B cell (primary cell): ENCODE measurements at regions of chr2 and their contacts with region 1.

Region 1: GRCh38 chr2:39124000-39124745 is 3.3 kb upstream of the SOS1 start:
- DNase-seq: peak; percentile 97
- ATAC-seq: peak; percentile 73
- H3K4me3 ChIP-seq: peak overlapping the region; percentile 72 to 96 (median 85)
- H3K4me3 Mint-ChIP-seq: peak overlapping the region; percentile 86
- H3K27ac ChIP-seq: peak overlapping the region; percentile 87 to 94
- H3K27ac Mint-ChIP-seq: peak overlapping the region; percentile 86
- H3K4me1 ChIP-seq: peaks cover 42 to 43% of the 10 kb centered on the region in 2 donors
- H3K4me1 Mint-ChIP-seq: peaks cover 54% of the 10 kb centered on the region
- H3K27me3 ChIP-seq: no peaks in the 10 kb centered on the region
- H3K27me3 Mint-ChIP-seq: no peaks in the 10 kb centered on the region
- CTCF ChIP-seq: peak; percentile 82

Region 2: GRCh38 chr2:38665854-38666555 is 458.2 kb before region 1 on chr2 and contains the start of gene GALM:
- CTCF ChIA-PET with region 1: no interaction called
- POLR2A ChIA-PET with region 1: no interaction called
- intact Hi-C with region 1: loop called (anchors 5 kb)
- DNase-seq: peak; percentile 50
- ATAC-seq: peak; percentile 70
- H3K4me3 ChIP-seq: peak within 1 kb of the TSS; percentile 66 to 90 (median 77)
- H3K4me3 Mint-ChIP-seq: peak within 1 kb of the TSS; percentile 90
- H3K27ac ChIP-seq: peak within 1 kb of the TSS; percentile 46 to 62
- H3K27ac Mint-ChIP-seq: peak within 1 kb of the TSS; percentile 66
- H3K4me1 ChIP-seq: peaks cover 8 to 21% of the 10 kb centered on the region in 2 donors
- H3K4me1 Mint-ChIP-seq: peaks cover 22% of the 10 kb centered on the region
- H3K27me3 ChIP-seq: no peaks in the 10 kb centered on the region
- H3K27me3 Mint-ChIP-seq: no peaks in the 10 kb centered on the region
- CTCF ChIP-seq: no peak
- total RNA-seq, gene GALM: 5.1 and 5.8 TPM in 2 replicates

Region 3: DNA sequence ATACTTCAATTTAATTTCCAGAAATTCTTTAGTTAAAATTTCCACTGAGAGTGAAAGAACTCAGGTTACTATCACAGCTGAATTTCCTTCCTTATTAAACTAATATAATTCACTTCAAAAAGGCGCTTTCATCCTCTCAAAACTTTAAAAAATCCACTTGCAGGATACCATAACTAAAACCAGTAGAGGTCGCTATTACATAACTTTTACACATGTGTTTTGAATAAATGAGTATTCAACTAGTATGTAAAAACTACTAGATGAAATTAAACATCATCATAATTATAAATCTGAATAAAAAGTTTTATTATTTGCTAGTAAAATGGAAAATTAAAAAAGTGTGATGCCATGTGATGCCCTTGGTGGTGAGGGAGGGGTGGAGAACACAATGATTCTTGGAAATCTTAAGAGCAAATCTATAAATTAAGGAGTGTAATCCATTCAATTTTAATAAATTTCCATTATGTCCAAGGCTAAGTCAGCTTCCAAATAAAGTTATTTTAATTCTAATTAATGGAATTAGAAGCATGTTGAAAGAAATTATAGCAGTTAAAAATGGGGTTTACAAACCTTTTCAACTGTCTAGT is 64.7 kb before region 1 on chr2:
- CTCF ChIA-PET with region 1: interaction called, 20 read pairs
- POLR2A ChIA-PET with region 1: no interaction called
- intact Hi-C with region 1: loop called (anchors 1 kb)
- DNase-seq: peak; percentile 65
- ATAC-seq: no peak
- H3K4me3 ChIP-seq: no peak overlapping the region
- H3K4me3 Mint-ChIP-seq: no peak overlapping the region
- H3K27ac ChIP-seq: no peak overlapping the region
- H3K27ac Mint-ChIP-seq: no peak overlapping the region
- H3K4me1 ChIP-seq: no peaks in the 10 kb centered on the region
- H3K4me1 Mint-ChIP-seq: no peaks in the 10 kb centered on the region
- H3K27me3 ChIP-seq: no peaks in the 10 kb centered on the region
- H3K27me3 Mint-ChIP-seq: no peaks in the 10 kb centered on the region
- CTCF ChIP-seq: peak; percentile 91

Region 4: GRCh38 chr2:39141331-39142271 is 17.4 kb after region 1 on chr2:
- CTCF ChIA-PET with region 1: interaction called, 15 read pairs
- POLR2A ChIA-PET with region 1: interaction called, 8 read pairs
- intact Hi-C with region 1: loop called (anchors 1 kb)
- DNase-seq: peak; percentile 74
- ATAC-seq: peak; percentile 85
- H3K4me3 ChIP-seq: peak overlapping the region in 1 of 5 experiments; percentile 30
- H3K4me3 Mint-ChIP-seq: peak overlapping the region; percentile 69
- H3K27ac ChIP-seq: peak overlapping the region; percentile 50 to 59
- H3K27ac Mint-ChIP-seq: peak overlapping the region; percentile 75
- H3K4me1 ChIP-seq: peaks cover 33 to 37% of the 10 kb centered on the region in 2 donors
- H3K4me1 Mint-ChIP-seq: peaks cover 41% of the 10 kb centered on the region
- H3K27me3 ChIP-seq: no peaks in the 10 kb centered on the region
- H3K27me3 Mint-ChIP-seq: no peaks in the 10 kb centered on the region
- CTCF ChIP-seq: no peak

Region 5: DNA sequence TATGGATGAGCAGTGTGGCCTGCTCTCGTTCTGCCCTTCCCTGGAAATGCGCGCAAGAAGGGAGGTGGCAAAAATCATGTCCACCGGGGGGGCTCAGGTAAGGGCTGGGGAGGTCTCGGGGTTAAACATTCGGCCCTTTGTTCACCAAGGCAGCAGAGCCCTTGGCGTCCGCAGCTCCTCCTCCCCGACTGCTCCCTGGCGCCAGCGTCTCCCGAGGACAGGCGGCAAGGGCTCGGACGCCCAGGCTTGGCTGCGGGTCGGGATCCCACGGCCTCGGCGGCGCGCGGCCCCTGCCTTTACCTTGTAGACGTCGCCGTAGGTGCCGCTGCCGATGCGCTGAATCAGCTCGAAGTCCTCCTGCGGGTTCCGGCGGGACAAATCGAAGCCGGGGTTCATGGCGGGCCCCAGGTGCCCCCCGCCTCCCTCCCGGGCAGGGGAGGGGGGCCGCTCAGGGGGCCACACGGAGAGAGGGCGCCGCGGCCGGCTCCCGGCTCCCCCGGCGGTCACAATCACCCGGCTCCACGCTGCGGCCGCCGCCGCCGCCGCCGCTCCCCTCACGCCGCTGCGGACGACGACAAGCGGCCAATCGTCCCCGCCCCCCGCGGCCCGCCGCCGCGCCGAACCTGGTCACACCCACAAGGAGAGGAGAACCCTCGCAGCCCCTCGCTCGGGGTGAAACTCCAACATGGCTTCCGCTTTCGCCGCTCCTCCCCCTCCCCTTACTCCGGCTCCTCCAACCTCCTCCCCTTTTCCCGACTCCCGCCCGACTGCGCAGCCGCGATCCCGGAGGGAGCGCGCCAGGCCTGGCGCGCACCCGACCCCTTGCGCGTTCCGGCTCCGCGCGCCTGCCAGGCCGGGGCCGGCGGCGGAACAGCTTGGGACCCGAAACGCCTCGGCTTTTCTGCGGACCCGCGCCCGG is 312.7 kb after region 1 on chr2 and contains the start of gene MAP4K3:
- CTCF ChIA-PET with region 1: no interaction called
- POLR2A ChIA-PET with region 1: no interaction called
- intact Hi-C with region 1: loop called (anchors 2 kb)
- DNase-seq: peak; percentile 85
- ATAC-seq: peak; percentile 78
- H3K4me3 ChIP-seq: peak within 1 kb of the TSS; percentile 71 to 85 (median 80)
- H3K4me3 Mint-ChIP-seq: peak within 1 kb of the TSS; percentile 88
- H3K27ac ChIP-seq: peak within 1 kb of the TSS; percentile 3 to 78
- H3K27ac Mint-ChIP-seq: peak within 1 kb of the TSS; percentile 87
- H3K4me1 ChIP-seq: peaks cover 17% of the 10 kb centered on the region in 2 donors
- H3K4me1 Mint-ChIP-seq: peaks cover 29% of the 10 kb centered on the region
- H3K27me3 ChIP-seq: no peaks in the 10 kb centered on the region
- H3K27me3 Mint-ChIP-seq: no peaks in the 10 kb centered on the region
- CTCF ChIP-seq: no peak
- total RNA-seq, gene MAP4K3: 28.3 and 31.3 TPM in 2 replicates